HAP-1 (cell line): ENCODE measurements at regions of chr21 and their contacts with region 1.

Region 1: GRCh38 chr21:45140346-45140940 is 66.1 kb downstream of the ADARB1 start:
- DNase-seq: peak; percentile 78 to 86
- H3K4me3 ChIP-seq: no peak overlapping the region
- H3K4me1 ChIP-seq: no peaks in the 10 kb centered on the region
- H3K27me3 ChIP-seq: no peaks in the 10 kb centered on the region

Region 2: DNA sequence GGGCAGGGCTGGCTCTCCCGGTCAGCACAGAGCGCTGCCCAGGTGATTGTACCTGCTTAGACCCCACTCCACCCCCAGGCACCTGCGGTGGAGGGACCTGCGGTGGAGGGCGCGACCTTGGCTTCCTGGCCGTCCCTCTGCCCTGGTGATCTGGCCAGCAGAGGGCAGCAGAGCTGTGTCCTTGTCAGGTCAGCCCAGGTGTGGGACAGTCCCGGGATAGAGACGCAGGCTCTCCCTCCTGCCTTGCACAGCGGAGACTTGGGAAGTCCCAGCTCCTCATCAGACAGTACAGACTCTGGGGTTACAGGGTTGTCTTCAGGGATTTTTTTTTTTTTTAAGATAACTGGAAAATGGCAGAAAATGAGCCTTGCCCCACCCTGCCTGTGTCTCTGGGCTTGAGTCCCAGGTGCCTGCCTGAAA is 190.7 kb before region 1 on chr21:
- in situ Hi-C with region 1: loop called (anchors 5 kb)
- DNase-seq: peak; percentile 42 to 90
- H3K4me3 ChIP-seq: no peak overlapping the region
- H3K4me1 ChIP-seq: no peaks in the 10 kb centered on the region
- H3K27me3 ChIP-seq: no peaks in the 10 kb centered on the region

Region 3: DNA sequence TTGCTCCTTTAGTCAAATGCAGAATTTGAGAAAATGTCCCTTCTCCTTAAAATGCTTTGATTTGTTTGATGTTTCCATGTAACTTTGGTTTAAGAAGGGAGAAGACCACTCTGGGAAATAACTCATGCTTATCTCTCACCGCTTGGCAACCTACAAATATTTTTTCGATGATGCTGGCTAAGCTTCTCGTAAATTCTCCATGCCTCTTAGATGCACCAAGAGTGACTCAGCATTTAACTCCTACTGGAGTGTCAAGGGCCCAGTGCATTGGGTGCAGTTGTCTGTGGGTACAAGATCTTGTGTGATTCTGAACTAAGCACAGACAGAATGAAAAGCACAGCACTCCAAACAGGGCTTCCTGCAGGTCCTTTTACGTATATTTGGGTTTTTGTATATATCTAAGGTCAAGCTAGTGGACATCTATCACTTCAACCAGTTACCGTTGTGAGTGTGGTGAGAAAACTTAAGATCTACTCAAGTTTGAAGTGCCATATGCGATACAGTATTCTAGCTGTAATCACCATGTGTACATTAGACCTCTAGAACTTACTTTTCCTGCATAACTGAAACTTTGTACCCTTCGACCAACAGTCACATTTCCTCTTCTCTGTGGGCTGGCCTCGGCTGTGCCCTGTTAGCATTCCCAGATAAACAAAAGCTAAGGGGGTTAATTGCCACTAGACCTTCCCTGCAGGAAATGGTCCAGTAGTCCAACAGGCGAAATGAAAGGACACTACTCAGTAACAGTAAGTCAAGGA is 320.3 kb after region 1 on chr21:
- in situ Hi-C with region 1: loop called (anchors 10 kb)
- DNase-seq: no peak
- H3K4me3 ChIP-seq: no peak overlapping the region
- H3K4me1 ChIP-seq: no peaks in the 10 kb centered on the region
- H3K27me3 ChIP-seq: no peaks in the 10 kb centered on the region